Naive thymus-derived CD4-positive, alpha-beta T cell (primary cell): ENCODE measurements at regions of chr12 and their contacts with region 1.

Region 1: DNA sequence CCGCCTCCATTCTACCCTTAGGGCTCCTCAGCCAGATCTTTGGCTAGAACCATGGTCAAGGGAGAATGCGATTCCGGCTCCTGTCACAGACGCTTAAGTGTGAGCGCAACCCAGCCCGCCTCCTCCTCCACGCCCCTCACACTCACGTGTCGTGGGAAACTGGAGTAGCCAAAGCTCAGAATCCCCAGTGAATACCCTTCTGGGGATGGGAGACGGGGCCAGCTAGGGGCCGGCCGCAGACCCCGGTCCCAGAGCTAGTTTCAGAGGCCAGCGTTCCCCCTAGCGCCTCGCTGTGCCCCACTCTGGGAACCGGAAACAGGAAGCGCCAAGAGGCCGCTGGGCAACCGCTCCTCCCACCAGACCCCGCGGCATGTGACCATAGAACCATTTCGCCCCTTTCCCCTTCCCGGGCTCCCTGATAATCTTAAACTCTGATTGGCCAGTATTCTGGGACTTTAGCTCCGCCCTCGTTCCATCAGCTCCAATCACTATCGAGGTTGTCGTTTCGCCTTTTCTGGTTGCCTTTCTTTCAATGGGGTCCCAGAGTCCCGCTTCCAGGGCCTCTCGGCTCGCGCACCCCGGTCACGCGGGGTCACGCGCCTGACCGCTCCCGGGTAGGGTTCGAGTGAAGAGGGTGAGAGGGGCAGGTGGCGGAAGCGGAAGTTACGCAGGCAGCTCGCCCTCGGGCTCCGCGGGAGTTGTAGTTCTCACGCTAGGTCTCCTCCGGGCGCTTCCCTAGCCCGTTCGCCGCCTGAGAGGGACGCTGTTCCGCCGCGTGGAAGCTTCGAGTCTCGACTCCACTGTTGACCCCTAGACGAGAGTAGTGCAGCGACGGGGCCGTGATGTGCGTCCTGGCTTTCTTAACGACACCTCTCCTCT is at the start of gene M6PR:
- DNase-seq: peak; percentile 76 to 91 (median 89)
- ATAC-seq: peak; percentile 80
- H3K4me3 ChIP-seq: peak within 1 kb of the TSS; percentile 93
- H3K4me3 Mint-ChIP-seq: peak within 1 kb of the TSS; percentile 83 to 99 (median 95)
- H3K27ac ChIP-seq: peak within 1 kb of the TSS; percentile 92
- H3K27ac Mint-ChIP-seq: peak within 1 kb of the TSS; percentile 89 to 99 (median 96)
- H3K4me1 ChIP-seq: peaks cover 41 to 46% of the 10 kb centered on the region in 2 donors
- H3K4me1 Mint-ChIP-seq: peaks cover 47 to 73% (median 70%) of the 10 kb centered on the region in 7 donors
- H3K27me3 ChIP-seq: no peaks in the 10 kb centered on the region
- H3K27me3 Mint-ChIP-seq: no peaks in the 10 kb centered on the region
- total RNA-seq, gene M6PR: 123 to 195 (median 176) TPM

Region 2: GRCh38 chr12:8681041-8681902 is 268.3 kb before region 1 on chr12:
- CTCF ChIA-PET with region 1: interaction called, 4 read pairs
- POLR2A ChIA-PET with region 1: no interaction called
- intact Hi-C with region 1: loop called in 1 of 2 experiments (anchors 1 kb)
- DNase-seq: no peak
- ATAC-seq: no peak
- H3K4me3 ChIP-seq: no peak overlapping the region
- H3K4me3 Mint-ChIP-seq: no peak overlapping the region
- H3K27ac ChIP-seq: no peak overlapping the region
- H3K27ac Mint-ChIP-seq: no peak overlapping the region
- H3K4me1 ChIP-seq: no peaks in the 10 kb centered on the region
- H3K4me1 Mint-ChIP-seq: peaks cover 0 to 5% (median 0%) of the 10 kb centered on the region in 7 donors
- H3K27me3 ChIP-seq: no peaks in the 10 kb centered on the region
- H3K27me3 Mint-ChIP-seq: peaks cover 0 to 14% (median 0%) of the 10 kb centered on the region in 5 donors

Region 3: DNA sequence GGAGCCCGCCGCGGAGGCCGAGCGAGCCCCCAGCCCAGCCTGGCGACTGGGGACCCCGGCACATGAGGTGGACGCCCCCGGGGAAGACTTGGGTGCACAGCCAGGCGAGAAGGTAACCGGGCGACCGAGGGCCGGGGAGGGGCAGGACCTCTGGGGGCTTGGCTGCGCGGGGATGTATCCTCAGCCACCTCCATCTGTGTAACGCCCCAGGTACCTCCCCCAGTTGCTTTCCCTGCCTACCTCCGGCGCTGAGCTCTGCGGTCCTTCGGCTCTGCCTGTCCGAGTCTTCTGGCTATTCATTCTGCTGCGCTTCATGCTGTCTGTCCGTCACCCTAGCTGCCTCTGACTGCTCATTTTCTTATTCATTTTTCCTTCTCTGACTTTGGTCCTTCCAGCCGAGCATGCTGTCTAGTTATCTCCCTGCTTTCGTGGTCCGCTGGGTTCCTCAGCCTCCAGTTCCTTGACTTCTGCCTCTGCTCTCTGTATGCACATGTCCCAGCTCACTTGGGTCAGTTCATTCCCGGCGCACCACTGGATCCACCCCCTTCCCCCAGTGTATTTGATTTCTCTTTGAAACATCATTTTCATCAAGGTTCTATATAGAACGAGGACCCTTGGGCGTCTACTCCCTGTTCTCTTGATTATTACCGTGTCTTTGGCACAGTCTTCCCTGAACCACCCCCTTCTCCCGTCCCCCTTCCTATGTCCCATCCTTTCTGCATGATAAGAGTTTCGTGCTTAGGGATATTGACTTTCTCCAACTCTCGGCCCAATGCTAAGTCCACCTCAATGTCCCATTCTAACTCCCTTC is 34.7 kb before region 1 on chr12:
- CTCF ChIA-PET with region 1: interaction called, 8 read pairs
- POLR2A ChIA-PET with region 1: interaction called, 5 read pairs
- intact Hi-C with region 1: loop called (anchors 1 kb)
- DNase-seq: peak; percentile 37 to 68 (median 60)
- ATAC-seq: peak; percentile 83
- H3K4me3 ChIP-seq: peak overlapping the region; percentile 73
- H3K4me3 Mint-ChIP-seq: no peak overlapping the region
- H3K27ac ChIP-seq: peak overlapping the region; percentile 79
- H3K27ac Mint-ChIP-seq: no peak overlapping the region
- H3K4me1 ChIP-seq: peaks cover 14 to 25% of the 10 kb centered on the region in 2 donors
- H3K4me1 Mint-ChIP-seq: peaks cover 7 to 20% (median 16%) of the 10 kb centered on the region in 7 donors
- H3K27me3 ChIP-seq: no peaks in the 10 kb centered on the region
- H3K27me3 Mint-ChIP-seq: peaks cover 0 to 16% (median 0%) of the 10 kb centered on the region in 5 donors

Region 4: DNA sequence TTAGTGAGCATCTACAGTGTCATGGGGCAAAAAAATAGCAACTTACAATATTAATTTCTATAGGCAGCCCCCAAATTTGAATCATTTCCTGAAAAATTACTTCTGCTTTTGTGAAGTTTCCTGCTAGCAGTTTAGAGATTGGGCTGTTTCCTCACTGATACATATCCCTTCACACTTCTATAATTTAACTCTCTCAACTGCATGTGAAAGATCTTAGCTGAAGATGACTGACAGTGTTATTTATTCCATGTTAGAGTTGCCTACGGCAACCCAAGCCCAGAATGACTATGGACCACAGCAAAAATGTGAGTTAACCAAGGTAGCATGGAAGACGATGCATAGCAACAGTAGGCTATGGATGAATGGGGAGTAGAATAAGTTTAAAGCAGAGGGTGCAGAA is 39.8 kb after region 1 on chr12 and contains the start of gene KLRG1:
- CTCF ChIA-PET with region 1: interaction called, 14 read pairs
- POLR2A ChIA-PET with region 1: interaction called, 5 read pairs
- intact Hi-C with region 1: loop called (anchors 1 to 5 kb)
- DNase-seq: peak in 2 of 9 donors; percentile 11 to 14
- ATAC-seq: peak; percentile 72
- H3K4me3 ChIP-seq: peak within 1 kb of the TSS; percentile 37
- H3K4me3 Mint-ChIP-seq: peak within 1 kb of the TSS; percentile 12 to 90 (median 77)
- H3K27ac ChIP-seq: peak within 1 kb of the TSS; percentile 27
- H3K27ac Mint-ChIP-seq: peak within 1 kb of the TSS in 8 of 9 donors; percentile 53 to 95 (median 84)
- H3K4me1 ChIP-seq: peaks cover 40 to 58% of the 10 kb centered on the region in 2 donors
- H3K4me1 Mint-ChIP-seq: peaks cover 34 to 78% (median 66%) of the 10 kb centered on the region in 7 donors
- H3K27me3 ChIP-seq: no peaks in the 10 kb centered on the region
- H3K27me3 Mint-ChIP-seq: no peaks in the 10 kb centered on the region
- total RNA-seq, gene KLRG1: 2.8 to 43.8 (median 26.9) TPM

Region 5: DNA sequence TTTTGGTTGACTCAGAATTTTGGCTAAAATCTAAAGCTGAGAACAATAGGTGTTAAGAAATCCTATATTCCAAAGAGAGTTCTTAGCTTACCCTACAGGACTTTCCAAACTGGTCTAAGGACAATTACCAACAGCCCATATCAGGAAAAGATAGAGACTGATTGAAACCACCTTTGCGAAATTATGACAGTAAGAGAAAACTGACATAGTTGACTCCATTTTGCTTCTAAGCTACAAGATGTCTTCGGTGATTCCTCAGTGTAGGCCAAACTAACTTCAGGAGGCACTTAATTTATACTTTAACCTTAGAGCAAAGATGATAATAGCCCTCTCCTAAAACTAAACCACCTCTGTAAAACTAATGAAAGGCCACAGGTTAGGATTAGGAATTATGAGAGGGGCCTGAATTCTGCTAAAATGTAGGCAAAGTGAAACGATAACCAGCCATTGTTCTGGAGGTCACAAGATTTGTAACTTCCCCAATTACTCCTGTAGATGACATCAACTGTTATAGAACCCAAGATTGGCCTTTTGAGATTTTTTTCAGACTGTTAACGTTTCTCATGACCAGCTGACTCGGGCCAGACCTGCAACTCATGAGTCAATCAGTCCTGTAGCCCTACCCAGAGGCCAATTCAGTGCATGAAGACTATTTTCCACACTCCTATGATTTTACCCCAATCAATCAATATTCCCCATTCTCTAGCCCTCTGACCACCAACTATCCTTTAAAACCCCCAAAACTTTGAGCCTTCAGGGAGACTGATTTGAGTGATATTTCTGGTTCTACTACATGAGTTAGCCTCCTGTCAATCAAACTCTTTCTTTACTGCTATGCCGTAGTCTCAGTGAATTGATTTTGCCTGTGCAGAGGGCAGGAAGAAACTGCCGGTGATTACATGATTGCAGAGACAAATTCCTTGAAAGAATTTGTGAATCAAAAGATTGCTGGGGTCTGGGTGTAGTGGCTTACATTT is 82.9 kb after region 1 on chr12:
- CTCF ChIA-PET with region 1: interaction called, 287 read pairs
- POLR2A ChIA-PET with region 1: interaction called, 148 read pairs
- intact Hi-C with region 1: no loop called
- DNase-seq: no peak
- ATAC-seq: peak; percentile 81
- H3K4me3 ChIP-seq: no peak overlapping the region
- H3K4me3 Mint-ChIP-seq: peak overlapping the region in 4 of 10 donors; percentile 3 to 37 (median 22)
- H3K27ac ChIP-seq: no peak overlapping the region
- H3K27ac Mint-ChIP-seq: peak overlapping the region in 6 of 9 donors; percentile 28 to 89 (median 75)
- H3K4me1 ChIP-seq: peaks cover 35% of the 10 kb centered on the region in 2 donors
- H3K4me1 Mint-ChIP-seq: peaks cover 15 to 82% (median 67%) of the 10 kb centered on the region in 7 donors
- H3K27me3 ChIP-seq: no peaks in the 10 kb centered on the region
- H3K27me3 Mint-ChIP-seq: peaks cover 0 to 2% (median 0%) of the 10 kb centered on the region in 5 donors

Region 6: GRCh38 chr12:9948606-9949296 is 999.2 kb after region 1 on chr12:
- CTCF ChIA-PET with region 1: no interaction called
- POLR2A ChIA-PET with region 1: no interaction called
- intact Hi-C with region 1: loop called in 1 of 2 experiments (anchors 5 kb)
- DNase-seq: peak in 5 of 9 donors; percentile 22 to 36 (median 26)
- ATAC-seq: peak; percentile 80
- H3K4me3 ChIP-seq: no peak overlapping the region
- H3K4me3 Mint-ChIP-seq: peak overlapping the region in 8 of 10 donors; percentile 0 to 53 (median 14)
- H3K27ac ChIP-seq: no peak overlapping the region
- H3K27ac Mint-ChIP-seq: peak overlapping the region; percentile 0 to 74 (median 2)
- H3K4me1 ChIP-seq: peaks cover 27 to 29% of the 10 kb centered on the region in 2 donors
- H3K4me1 Mint-ChIP-seq: peaks cover 40 to 61% (median 43%) of the 10 kb centered on the region in 7 donors
- H3K27me3 ChIP-seq: no peaks in the 10 kb centered on the region
- H3K27me3 Mint-ChIP-seq: no peaks in the 10 kb centered on the region